ENCODE measurements at regions of chr11 and their contacts with region 1.

Region 1: GRCh38 chr11:7892840-7893254 is 38.2 kb downstream of the OR10A6 start:
- DNase-seq: no peak
- H3K4me3 Mint-ChIP-seq: no peak overlapping the region
- H3K27ac Mint-ChIP-seq: peak overlapping the region; percentile 15
- H3K4me1 Mint-ChIP-seq: peaks cover 23% of the 10 kb centered on the region
- H3K27me3 Mint-ChIP-seq: peaks cover 26% of the 10 kb centered on the region
- CTCF ChIP-seq: peak; percentile 38

Region 2: DNA sequence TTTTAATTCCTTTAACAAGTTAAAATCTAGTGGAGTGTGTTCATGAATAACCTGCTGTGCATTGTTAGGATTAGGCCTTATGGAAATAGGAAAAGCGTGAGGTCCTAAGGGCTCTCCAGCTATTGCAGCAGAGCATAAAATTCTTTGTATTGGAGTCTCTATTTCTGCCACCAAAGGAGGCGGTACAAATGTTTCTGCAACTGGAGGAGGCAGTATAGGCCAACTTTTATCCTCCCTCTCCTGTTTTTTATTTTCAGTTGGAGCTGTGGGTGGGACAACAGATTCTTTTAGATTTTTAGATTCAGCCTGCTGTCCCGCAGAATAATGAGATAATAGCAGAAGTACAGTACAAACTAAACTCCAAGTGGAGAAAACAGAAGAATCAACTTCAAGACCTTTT is 12.1 kb after region 1 on chr11:
- CTCF ChIA-PET with region 1: interaction called, 12 read pairs
- intact Hi-C with region 1: no loop called
- DNase-seq: no peak
- H3K4me3 Mint-ChIP-seq: no peak overlapping the region
- H3K27ac Mint-ChIP-seq: no peak overlapping the region
- H3K4me1 Mint-ChIP-seq: peaks cover 32% of the 10 kb centered on the region
- H3K27me3 Mint-ChIP-seq: no peaks in the 10 kb centered on the region
- CTCF ChIP-seq: no peak

Region 3: GRCh38 chr11:7986768-7987559 is 94.1 kb after region 1 on chr11 and contains the start of gene EIF3F:
- CTCF ChIA-PET with region 1: interaction called, 37 read pairs
- intact Hi-C with region 1: loop called (anchors 1 kb)
- DNase-seq: peak; percentile 87
- H3K4me3 Mint-ChIP-seq: peak within 1 kb of the TSS; percentile 99
- H3K27ac Mint-ChIP-seq: peak within 1 kb of the TSS; percentile 100
- H3K4me1 Mint-ChIP-seq: peaks cover 34% of the 10 kb centered on the region
- H3K27me3 Mint-ChIP-seq: no peaks in the 10 kb centered on the region
- CTCF ChIP-seq: peak; percentile 93
- total RNA-seq, gene EIF3F: 178 and 197 TPM in 2 replicates

Region 4: DNA sequence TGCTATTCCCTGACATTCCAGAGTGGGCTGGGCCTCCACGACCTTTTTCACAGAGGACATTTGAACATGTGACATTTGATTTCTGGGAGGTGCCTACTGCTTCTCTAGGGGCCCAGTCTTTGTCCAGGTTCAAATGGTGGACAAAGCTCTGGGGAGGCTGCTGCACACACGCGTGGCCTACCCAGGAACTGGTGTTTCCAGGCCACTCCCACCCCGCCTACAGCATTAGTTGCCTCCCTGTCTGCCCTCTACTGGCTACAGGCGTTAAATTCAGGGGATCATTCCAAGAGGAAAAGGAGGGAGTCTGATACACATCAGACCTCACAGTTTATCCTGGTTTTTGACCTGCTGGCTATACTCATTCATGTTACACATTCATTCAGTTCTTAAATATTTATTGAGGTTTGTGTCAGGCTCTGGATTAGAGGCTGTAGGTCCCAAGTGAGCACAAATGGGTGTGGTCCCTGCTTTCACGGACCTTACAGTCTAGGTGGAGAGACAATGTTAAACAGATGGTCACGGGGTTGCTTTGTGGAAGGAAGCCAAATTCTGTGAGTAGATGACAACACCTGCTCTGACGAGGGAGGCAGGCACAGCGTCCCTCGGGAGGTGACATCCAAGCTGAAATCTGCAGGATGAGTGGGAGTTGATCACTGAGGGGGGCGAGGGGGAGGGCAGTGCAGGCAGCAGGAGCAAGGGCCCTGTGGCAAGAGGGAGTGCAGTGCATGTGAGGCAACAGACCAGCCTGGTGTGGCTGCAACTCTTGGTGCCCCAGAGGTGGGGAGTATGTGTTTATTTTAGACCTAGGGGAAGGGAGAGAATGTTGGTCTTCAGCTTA is 200.0 kb after region 1 on chr11:
- CTCF ChIA-PET with region 1: no interaction called
- intact Hi-C with region 1: loop called (anchors 5 kb)
- DNase-seq: peak; percentile 72
- H3K4me3 Mint-ChIP-seq: no peak overlapping the region
- H3K27ac Mint-ChIP-seq: no peak overlapping the region
- H3K4me1 Mint-ChIP-seq: no peaks in the 10 kb centered on the region
- H3K27me3 Mint-ChIP-seq: peaks cover 12% of the 10 kb centered on the region
- CTCF ChIP-seq: peak; percentile 56

Measured in Calu3 (cell line).